Cardiac septum (tissue), 1 donor: ENCODE measurements at regions of chr11 and their contacts with region 1.

Region 1: DNA sequence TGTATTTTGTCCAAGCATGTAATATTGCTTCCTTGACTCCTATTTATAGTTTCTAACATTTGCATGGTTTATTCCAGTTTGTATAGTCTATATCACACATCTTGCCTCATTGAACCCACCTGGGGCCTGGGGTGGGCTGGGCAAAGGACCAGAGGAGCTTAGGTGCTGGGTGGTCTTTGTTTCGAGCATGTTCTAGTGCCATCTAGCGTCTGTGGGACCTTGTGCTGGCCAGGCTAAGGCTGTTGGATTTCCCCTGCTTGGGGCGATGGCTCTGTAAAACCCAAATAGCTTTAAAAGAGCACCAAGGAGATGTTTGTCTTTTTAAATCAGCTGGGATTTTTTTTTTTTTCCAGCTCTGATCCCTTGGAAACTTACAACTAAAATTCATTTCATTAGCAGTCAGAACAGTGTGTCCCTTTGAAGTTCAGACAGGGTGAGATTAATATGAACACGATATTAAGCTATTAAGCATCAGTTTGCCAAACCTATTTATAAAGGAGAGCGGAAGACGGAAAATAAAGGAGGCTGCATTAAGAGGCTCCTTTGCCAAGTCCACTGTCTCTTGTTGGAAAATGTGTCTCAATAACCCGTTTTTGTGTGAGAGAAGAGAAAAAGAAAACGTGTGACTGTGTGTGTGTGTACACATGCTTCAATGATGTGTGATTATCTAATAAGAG is 157.4 kb downstream of the COMMD9 start:
- DNase-seq: no peak

Region 2: GRCh38 chr11:35485656-35486322 is 646.1 kb before region 1 on chr11:
- intact Hi-C with region 1: loop called (anchors 10 kb)
- DNase-seq: peak; percentile 84

Region 3: GRCh38 chr11:35822815-35823495 is 308.9 kb before region 1 on chr11:
- intact Hi-C with region 1: loop called (anchors 5 kb)
- DNase-seq: no peak

Region 4: DNA sequence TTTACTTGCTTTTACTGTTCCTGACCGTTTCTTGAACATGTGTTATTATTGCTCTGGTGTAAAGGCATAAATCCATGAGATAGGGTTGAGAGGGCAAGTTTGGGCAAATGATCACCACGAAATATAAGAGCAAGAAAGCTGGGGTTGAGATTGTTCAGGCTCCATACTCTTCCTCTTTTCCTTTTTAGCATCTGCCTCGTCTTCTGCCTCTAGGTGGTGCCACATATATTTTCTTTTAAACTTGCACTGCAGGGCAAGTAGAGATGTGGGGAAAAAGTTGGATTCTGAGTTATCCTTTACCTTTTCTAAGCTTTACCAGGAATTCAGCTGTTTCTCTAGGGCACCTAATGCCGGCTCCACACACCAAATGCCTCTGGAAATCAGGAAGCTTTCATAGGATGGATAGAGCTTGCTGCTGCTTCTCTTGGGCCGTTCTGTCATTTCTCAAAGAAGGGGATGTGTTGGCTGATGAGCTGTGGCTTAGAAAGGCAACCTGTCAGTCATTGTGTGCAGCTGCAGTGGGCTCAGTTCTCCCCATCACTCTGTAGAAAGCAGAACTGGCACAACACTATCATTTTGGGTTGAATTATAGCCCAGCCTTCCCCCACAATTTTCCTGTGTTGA is 89.8 kb before region 1 on chr11:
- intact Hi-C with region 1: loop called (anchors 5 kb)
- DNase-seq: no peak

Region 5: GRCh38 chr11:36265793-36266628 is 134.2 kb after region 1 on chr11:
- intact Hi-C with region 1: loop called (anchors 10 kb)
- DNase-seq: peak; percentile 84